ENCODE measurements at regions of chr12 and their contacts with region 1.

Region 1: DNA sequence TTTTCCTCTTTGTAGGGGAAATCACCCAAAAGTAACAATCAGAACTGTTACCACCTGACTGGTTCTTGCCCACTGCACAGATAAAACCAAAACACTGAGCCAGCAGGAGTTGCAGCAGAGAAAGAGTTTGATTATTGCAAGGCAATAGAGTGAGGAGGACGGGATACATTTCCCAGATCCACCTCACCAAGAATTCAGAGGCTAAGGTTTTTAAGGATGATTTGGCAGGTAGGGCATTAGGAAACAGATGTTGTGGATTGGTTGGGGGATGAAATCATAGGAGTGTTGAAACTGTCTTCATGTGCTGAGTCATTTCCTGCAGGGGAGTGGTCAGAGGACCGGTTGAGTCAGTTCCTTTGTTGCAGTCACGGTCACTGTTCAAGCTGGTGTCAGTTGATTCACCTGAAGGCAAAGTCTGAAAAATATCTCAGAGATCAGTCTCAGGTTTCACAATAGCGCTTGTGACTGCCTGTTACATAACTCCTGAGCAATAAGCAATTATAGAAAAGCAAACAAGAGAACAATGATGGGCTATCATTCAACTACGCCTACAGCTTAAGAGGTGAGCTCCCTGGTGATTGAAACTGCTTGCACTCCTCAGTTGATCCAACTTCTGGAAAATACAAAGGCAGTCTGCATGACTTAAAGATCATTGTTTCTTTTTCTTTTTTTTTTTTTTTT is 20.3 kb upstream of the AMN1 start:
- DNase-seq: no peak
- ATAC-seq: peak; percentile 74
- H3K4me3 Mint-ChIP-seq: peak overlapping the region; percentile 68
- H3K27ac Mint-ChIP-seq: peak overlapping the region; percentile 97
- H3K4me1 Mint-ChIP-seq: peaks cover 78% of the 10 kb centered on the region
- H3K27me3 Mint-ChIP-seq: no peaks in the 10 kb centered on the region
- CTCF ChIP-seq: no peak

Region 2: DNA sequence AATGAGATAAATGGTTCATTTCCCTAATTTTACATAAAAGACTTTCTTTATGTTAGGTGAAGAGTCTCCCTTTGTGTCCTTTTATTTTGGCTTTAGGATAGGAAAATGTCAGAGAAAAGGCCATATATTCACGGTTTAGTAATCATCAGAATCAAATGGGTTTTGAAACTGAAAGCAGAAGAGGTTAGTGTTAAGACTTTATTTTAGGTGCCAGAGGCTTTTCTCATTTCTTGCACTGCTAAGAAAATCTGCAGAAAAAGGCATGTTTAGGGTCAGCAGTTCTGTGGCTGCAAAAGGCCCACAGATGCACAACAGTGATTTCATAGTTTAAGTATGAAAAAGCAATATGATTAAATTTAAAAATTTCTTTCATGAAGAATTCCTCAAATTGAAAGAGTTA is 342.8 kb before region 1 on chr12:
- CTCF ChIA-PET with region 1: no interaction called
- POLR2A ChIA-PET with region 1: no interaction called
- intact Hi-C with region 1: loop called (anchors 10 kb)
- DNase-seq: no peak
- ATAC-seq: peak; percentile 39
- H3K4me3 Mint-ChIP-seq: peak overlapping the region; percentile 65
- H3K27ac Mint-ChIP-seq: peak overlapping the region; percentile 77
- H3K4me1 Mint-ChIP-seq: peaks cover 33% of the 10 kb centered on the region
- H3K27me3 Mint-ChIP-seq: no peaks in the 10 kb centered on the region
- CTCF ChIP-seq: no peak

Region 3: GRCh38 chr12:31728917-31729640 is 20.1 kb before region 1 on chr12 and contains the start of gene AMN1:
- CTCF ChIA-PET with region 1: interaction called, 3 read pairs
- POLR2A ChIA-PET with region 1: interaction called, 151 read pairs
- intact Hi-C with region 1: loop called (anchors 1 kb)
- DNase-seq: peak; percentile 100
- ATAC-seq: peak; percentile 90
- H3K4me3 Mint-ChIP-seq: peak within 1 kb of the TSS; percentile 92
- H3K27ac Mint-ChIP-seq: peak within 1 kb of the TSS; percentile 98
- H3K4me1 Mint-ChIP-seq: peaks cover 74% of the 10 kb centered on the region
- H3K27me3 Mint-ChIP-seq: no peaks in the 10 kb centered on the region
- CTCF ChIP-seq: no peak
- total RNA-seq, gene AMN1: 13.7 and 15.5 TPM in 2 replicates

Region 4: GRCh38 chr12:31804185-31804504 is 55.0 kb after region 1 on chr12:
- CTCF ChIA-PET with region 1: interaction called, 3 read pairs
- POLR2A ChIA-PET with region 1: interaction called, 46 read pairs
- intact Hi-C with region 1: loop called (anchors 1 kb)
- DNase-seq: no peak
- ATAC-seq: no peak
- H3K4me3 Mint-ChIP-seq: peak overlapping the region; percentile 78
- H3K27ac Mint-ChIP-seq: peak overlapping the region; percentile 88
- H3K4me1 Mint-ChIP-seq: peaks cover 50% of the 10 kb centered on the region
- H3K27me3 Mint-ChIP-seq: no peaks in the 10 kb centered on the region
- CTCF ChIP-seq: no peak

Region 5: GRCh38 chr12:31832740-31833729 is 83.9 kb after region 1 on chr12:
- CTCF ChIA-PET with region 1: no interaction called
- POLR2A ChIA-PET with region 1: interaction called, 23 read pairs
- intact Hi-C with region 1: loop called (anchors 1 kb)
- DNase-seq: peak; percentile 36
- ATAC-seq: peak; percentile 84
- H3K4me3 Mint-ChIP-seq: peak overlapping the region; percentile 59
- H3K27ac Mint-ChIP-seq: peak overlapping the region; percentile 94
- H3K4me1 Mint-ChIP-seq: peaks cover 76% of the 10 kb centered on the region
- H3K27me3 Mint-ChIP-seq: no peaks in the 10 kb centered on the region
- CTCF ChIP-seq: no peak

Region 6: GRCh38 chr12:31853520-31853919 is 104.4 kb after region 1 on chr12:
- CTCF ChIA-PET with region 1: no interaction called
- POLR2A ChIA-PET with region 1: no interaction called
- intact Hi-C with region 1: no loop called
- DNase-seq: no peak
- ATAC-seq: no peak
- H3K4me3 Mint-ChIP-seq: no peak overlapping the region
- H3K27ac Mint-ChIP-seq: peak overlapping the region; percentile 20
- H3K4me1 Mint-ChIP-seq: peaks cover 6% of the 10 kb centered on the region
- H3K27me3 Mint-ChIP-seq: no peaks in the 10 kb centered on the region
- CTCF ChIP-seq: no peak

Region 7: GRCh38 chr12:31890295-31891285 is 141.4 kb after region 1 on chr12:
- CTCF ChIA-PET with region 1: no interaction called
- POLR2A ChIA-PET with region 1: interaction called, 14 read pairs
- intact Hi-C with region 1: no loop called
- DNase-seq: no peak
- ATAC-seq: peak; percentile 43
- H3K4me3 Mint-ChIP-seq: peak overlapping the region; percentile 45
- H3K27ac Mint-ChIP-seq: peak overlapping the region; percentile 82
- H3K4me1 Mint-ChIP-seq: peaks cover 71% of the 10 kb centered on the region
- H3K27me3 Mint-ChIP-seq: no peaks in the 10 kb centered on the region
- CTCF ChIP-seq: no peak

Region 8: DNA sequence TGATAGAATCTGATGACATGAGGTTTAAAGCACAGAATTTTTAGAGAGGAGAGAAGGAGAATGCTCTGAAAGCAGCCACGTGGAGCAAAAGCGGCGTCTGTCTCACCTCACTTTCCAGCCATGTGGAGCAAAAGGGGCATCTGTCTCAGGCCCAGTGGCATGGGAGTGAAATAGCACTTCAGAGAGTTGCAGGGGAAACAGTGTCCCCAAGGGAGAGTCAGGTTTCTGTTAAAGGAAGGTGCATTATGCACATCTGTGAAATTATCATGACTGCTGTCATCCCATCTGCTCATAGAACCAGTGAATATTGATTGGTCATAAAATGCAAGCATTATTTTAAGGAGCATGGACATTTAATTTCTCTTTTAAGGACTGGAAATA is 481.4 kb after region 1 on chr12:
- CTCF ChIA-PET with region 1: no interaction called
- POLR2A ChIA-PET with region 1: no interaction called
- intact Hi-C with region 1: no loop called
- DNase-seq: no peak
- ATAC-seq: peak; percentile 96
- H3K4me3 Mint-ChIP-seq: no peak overlapping the region
- H3K27ac Mint-ChIP-seq: no peak overlapping the region
- H3K4me1 Mint-ChIP-seq: no peaks in the 10 kb centered on the region
- H3K27me3 Mint-ChIP-seq: no peaks in the 10 kb centered on the region
- CTCF ChIP-seq: no peak

Region 9: DNA sequence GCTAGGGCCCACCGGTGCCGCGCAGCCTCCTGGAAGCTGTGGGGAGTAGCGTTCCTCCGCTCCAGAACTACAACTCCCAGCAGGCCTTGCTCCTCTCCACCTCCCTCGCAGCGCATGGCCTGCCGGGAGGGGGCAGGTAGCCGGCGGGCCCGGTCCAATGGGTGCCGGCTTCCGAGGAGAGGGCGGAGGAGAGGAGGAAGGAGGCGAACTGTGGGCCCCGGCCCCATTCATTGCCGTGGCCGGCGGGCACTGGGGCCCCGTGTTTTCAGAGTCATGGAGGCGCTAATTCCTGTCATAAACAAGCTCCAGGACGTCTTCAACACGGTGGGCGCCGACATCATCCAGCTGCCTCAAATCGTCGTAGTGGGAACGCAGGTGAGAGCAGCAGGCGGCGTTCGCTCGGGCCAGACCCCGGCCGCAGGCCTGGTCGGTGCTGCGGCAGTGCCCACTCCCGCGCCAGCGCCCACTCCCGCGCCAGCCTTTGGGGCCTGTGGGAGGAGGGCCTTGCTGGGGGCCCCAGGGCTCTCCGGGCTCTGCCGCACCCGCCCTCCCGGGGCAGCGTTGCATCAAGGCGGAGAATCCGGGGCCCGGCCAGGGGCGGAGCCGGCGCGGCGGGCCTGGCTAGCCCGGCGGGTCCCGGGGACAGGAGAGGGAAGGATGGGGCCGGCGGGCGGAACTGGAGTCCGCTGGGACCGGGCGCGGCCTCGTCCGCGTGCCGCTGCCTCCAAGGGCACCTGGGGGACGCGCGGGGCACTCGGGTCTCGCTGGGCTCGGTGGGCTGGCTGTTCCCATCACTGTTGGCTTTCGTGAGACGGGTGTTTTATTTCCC is 930.1 kb after region 1 on chr12 and contains the start of gene DNM1L:
- CTCF ChIA-PET with region 1: no interaction called
- POLR2A ChIA-PET with region 1: no interaction called
- intact Hi-C with region 1: loop called (anchors 10 kb)
- DNase-seq: peak; percentile 86
- ATAC-seq: peak; percentile 95
- H3K4me3 Mint-ChIP-seq: peak within 1 kb of the TSS; percentile 90
- H3K27ac Mint-ChIP-seq: peak within 1 kb of the TSS; percentile 83
- H3K4me1 Mint-ChIP-seq: peaks cover 36% of the 10 kb centered on the region
- H3K27me3 Mint-ChIP-seq: no peaks in the 10 kb centered on the region
- CTCF ChIP-seq: no peak
- total RNA-seq, gene DNM1L: 67.8 and 83.1 TPM in 2 replicates

Measured in activated B cell treated with CpG ODN at 0.5 μM for 24 hours (primary cell).